ENCODE measurements at regions of chr5 and their contacts with region 1.

Region 1: GRCh38 chr5:180810210-180810958 is 7.8 kb upstream of the MGAT1 start:
- DNase-seq: peak; percentile 91 to 99 (median 97)
- ATAC-seq: peak; percentile 79
- H3K4me3 ChIP-seq: peak overlapping the region; percentile 66 to 96
- H3K4me3 Mint-ChIP-seq: peak overlapping the region; percentile 84
- H3K27ac ChIP-seq: peak overlapping the region; percentile 94 to 98
- H3K27ac Mint-ChIP-seq: peak overlapping the region; percentile 100
- H3K4me1 ChIP-seq: peaks cover 50% of the 10 kb centered on the region
- H3K4me1 Mint-ChIP-seq: peaks cover 72% of the 10 kb centered on the region
- H3K27me3 ChIP-seq: no peaks in the 10 kb centered on the region
- H3K27me3 Mint-ChIP-seq: no peaks in the 10 kb centered on the region
- CTCF ChIP-seq: no peak

Region 2: GRCh38 chr5:180494060-180494509 is 316.3 kb before region 1 on chr5 and contains the start of gene CNOT6:
- CTCF ChIA-PET with region 1: no interaction called
- POLR2A ChIA-PET with region 1: interaction called, 3 read pairs
- intact Hi-C with region 1: loop called (anchors 10 kb)
- DNase-seq: peak; percentile 90 to 98 (median 95)
- ATAC-seq: peak; percentile 91
- H3K4me3 ChIP-seq: peak within 1 kb of the TSS; percentile 64
- H3K4me3 Mint-ChIP-seq: peak within 1 kb of the TSS; percentile 98
- H3K27ac ChIP-seq: peak within 1 kb of the TSS; percentile 80 to 88
- H3K27ac Mint-ChIP-seq: peak within 1 kb of the TSS; percentile 99
- H3K4me1 ChIP-seq: peaks cover 16% of the 10 kb centered on the region
- H3K4me1 Mint-ChIP-seq: peaks cover 40% of the 10 kb centered on the region
- H3K27me3 ChIP-seq: no peaks in the 10 kb centered on the region
- H3K27me3 Mint-ChIP-seq: no peaks in the 10 kb centered on the region
- CTCF ChIP-seq: no peak
- total RNA-seq, gene CNOT6: 13.1 to 13.9 TPM

Region 3: DNA sequence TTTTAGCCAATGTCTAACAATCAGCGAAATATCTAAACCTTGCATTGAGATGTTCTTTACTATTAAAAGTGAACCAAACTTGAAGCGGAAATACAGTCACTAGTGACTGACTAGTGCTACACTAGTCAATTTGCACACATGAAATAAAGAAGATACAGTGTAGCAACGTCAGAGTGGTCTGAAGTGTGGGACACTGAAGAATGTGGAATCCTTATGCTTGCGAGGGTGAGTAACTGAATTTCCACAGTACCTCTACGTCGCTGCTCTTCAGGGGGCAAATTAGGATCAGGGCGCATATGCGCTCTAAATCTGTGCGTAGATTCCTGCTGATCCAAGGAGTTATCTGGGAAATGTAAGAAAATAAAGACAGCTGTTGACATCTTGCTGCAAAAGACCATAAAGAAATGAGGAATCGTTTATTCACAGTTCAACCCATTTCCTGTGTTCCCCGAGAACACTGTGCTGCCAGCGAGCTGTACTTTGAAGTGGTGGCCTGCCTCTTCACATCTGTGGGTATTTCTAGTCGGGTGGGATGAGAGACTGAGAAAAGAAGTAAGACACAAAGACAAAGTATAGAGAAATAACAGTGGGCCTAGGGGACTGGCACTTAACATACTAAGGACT is 121.2 kb before region 1 on chr5:
- CTCF ChIA-PET with region 1: no interaction called
- POLR2A ChIA-PET with region 1: no interaction called
- intact Hi-C with region 1: loop called in 1 of 2 experiments (anchors 10 kb)
- DNase-seq: peak in 8 of 9 experiments; percentile 32 to 84 (median 64)
- ATAC-seq: peak; percentile 70
- H3K4me3 ChIP-seq: peak overlapping the region; percentile 24 to 39
- H3K4me3 Mint-ChIP-seq: peak overlapping the region; percentile 78
- H3K27ac ChIP-seq: peak overlapping the region; percentile 36 to 68
- H3K27ac Mint-ChIP-seq: peak overlapping the region; percentile 95
- H3K4me1 ChIP-seq: peaks cover 85% of the 10 kb centered on the region
- H3K4me1 Mint-ChIP-seq: peaks cover 85% of the 10 kb centered on the region
- H3K27me3 ChIP-seq: no peaks in the 10 kb centered on the region
- H3K27me3 Mint-ChIP-seq: no peaks in the 10 kb centered on the region
- CTCF ChIP-seq: no peak

Region 4: DNA sequence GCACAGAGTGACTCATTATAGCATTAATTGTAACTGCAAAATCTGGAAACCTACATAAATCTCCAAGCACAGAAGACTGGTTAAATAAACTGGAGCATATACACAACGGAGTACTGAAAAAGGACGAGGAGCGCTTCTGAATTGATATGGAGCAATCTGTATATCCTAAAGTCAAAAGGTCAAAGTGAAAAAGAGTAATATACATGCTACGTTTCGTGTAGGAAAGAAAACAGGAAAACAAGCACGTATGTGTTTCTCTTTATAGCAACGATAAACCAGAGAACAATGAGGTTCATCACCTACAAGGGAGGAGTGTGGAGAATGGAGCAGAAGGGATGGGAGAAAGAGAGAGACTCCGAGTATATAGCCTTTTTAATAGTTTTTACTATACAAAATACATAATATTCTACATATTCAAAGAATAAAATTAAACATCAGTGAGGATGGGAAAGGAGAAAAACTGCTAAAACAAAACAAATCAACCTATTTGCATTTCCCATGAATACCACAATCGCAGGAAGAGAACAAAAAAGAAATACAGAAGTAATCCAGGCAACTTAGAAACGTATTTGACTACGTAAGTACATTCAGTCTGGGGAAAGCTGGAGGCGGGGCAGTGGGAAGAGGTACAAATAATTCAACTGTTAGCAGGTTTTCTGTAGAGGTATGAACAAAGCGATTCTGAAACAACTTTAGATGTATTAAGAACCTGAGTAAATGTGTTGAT is 42.9 kb after region 1 on chr5:
- CTCF ChIA-PET with region 1: no interaction called
- POLR2A ChIA-PET with region 1: no interaction called
- intact Hi-C with region 1: no loop called
- DNase-seq: no peak
- ATAC-seq: no peak
- H3K4me3 ChIP-seq: no peak overlapping the region
- H3K4me3 Mint-ChIP-seq: no peak overlapping the region
- H3K27ac ChIP-seq: no peak overlapping the region
- H3K27ac Mint-ChIP-seq: no peak overlapping the region
- H3K4me1 ChIP-seq: no peaks in the 10 kb centered on the region
- H3K4me1 Mint-ChIP-seq: peaks cover 29% of the 10 kb centered on the region
- H3K27me3 ChIP-seq: no peaks in the 10 kb centered on the region
- H3K27me3 Mint-ChIP-seq: no peaks in the 10 kb centered on the region
- CTCF ChIP-seq: no peak